Common myeloid progenitor, CD34-positive (primary cell): ENCODE measurements at regions of chr15 and their contacts with region 1.

Region 1: GRCh38 chr15:91271565-91272153 is 171.6 kb downstream of the SV2B start:
- DNase-seq: peak; percentile 72 to 85 (median 73)
- H3K4me3 ChIP-seq: peak overlapping the region in 1 of 7 experiments; percentile 38
- H3K27ac ChIP-seq: no peak overlapping the region
- H3K4me1 ChIP-seq: peaks cover 0 to 7% (median 2%) of the 10 kb centered on the region in 4 experiments
- H3K27me3 ChIP-seq: peaks cover 0 to 3% (median 0%) of the 10 kb centered on the region in 5 experiments

Region 2: GRCh38 chr15:90931737-90932659 is 339.7 kb before region 1 on chr15 and contains the start of gene HDDC3:
- CTCF ChIA-PET with region 1: interaction called, 14 read pairs
- POLR2A ChIA-PET with region 1: no interaction called
- DNase-seq: peak; percentile 90 to 93 (median 91)
- H3K4me3 ChIP-seq: peak within 1 kb of the TSS; percentile 55 to 91 (median 87)
- H3K27ac ChIP-seq: peak within 1 kb of the TSS; percentile 36 to 89
- H3K4me1 ChIP-seq: peaks cover 20 to 72% (median 60%) of the 10 kb centered on the region in 4 experiments
- H3K27me3 ChIP-seq: no peaks in the 10 kb centered on the region

Region 3: GRCh38 chr15:91049378-91050127 is 222.1 kb before region 1 on chr15:
- CTCF ChIA-PET with region 1: interaction called, 41 read pairs
- POLR2A ChIA-PET with region 1: no interaction called
- DNase-seq: peak; percentile 62 to 80 (median 75)
- H3K4me3 ChIP-seq: no peak overlapping the region
- H3K27ac ChIP-seq: no peak overlapping the region
- H3K4me1 ChIP-seq: peaks cover 0 to 9% (median 6%) of the 10 kb centered on the region in 4 experiments
- H3K27me3 ChIP-seq: peaks cover 0 to 9% (median 3%) of the 10 kb centered on the region in 5 experiments

Region 4: GRCh38 chr15:91055548-91056331 is 215.9 kb before region 1 on chr15:
- CTCF ChIA-PET with region 1: interaction called, 41 read pairs
- POLR2A ChIA-PET with region 1: no interaction called
- DNase-seq: peak; percentile 37 to 45 (median 44)
- H3K4me3 ChIP-seq: no peak overlapping the region
- H3K27ac ChIP-seq: no peak overlapping the region
- H3K4me1 ChIP-seq: no peaks in the 10 kb centered on the region
- H3K27me3 ChIP-seq: peaks cover 0 to 41% (median 11%) of the 10 kb centered on the region in 5 experiments

Region 5: DNA sequence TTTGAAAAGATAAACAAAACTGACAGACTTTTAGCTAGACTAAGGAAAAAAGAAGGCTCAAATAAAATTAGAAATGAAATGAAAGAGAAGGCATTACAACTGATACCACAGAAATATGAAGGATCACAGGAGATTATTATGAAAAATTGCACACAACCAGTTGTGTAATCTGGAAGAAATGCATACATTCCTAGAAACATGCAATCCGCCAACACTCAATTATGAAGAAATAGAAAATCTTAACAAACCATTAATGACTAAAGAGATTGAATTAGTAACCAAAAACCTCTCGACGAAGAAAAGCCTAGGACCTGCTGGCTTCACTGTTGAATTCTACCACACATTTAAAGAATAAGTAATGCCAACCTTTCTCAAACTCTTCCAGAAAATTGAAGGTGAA is 22.1 kb before region 1 on chr15:
- CTCF ChIA-PET with region 1: interaction called, 48 read pairs
- POLR2A ChIA-PET with region 1: no interaction called
- DNase-seq: no peak
- H3K4me3 ChIP-seq: no peak overlapping the region
- H3K27ac ChIP-seq: no peak overlapping the region
- H3K4me1 ChIP-seq: peaks cover 0 to 15% (median 8%) of the 10 kb centered on the region in 4 experiments
- H3K27me3 ChIP-seq: no peaks in the 10 kb centered on the region

Region 6: GRCh38 chr15:91258425-91258779 is 13.3 kb before region 1 on chr15:
- CTCF ChIA-PET with region 1: interaction called, 48 read pairs
- POLR2A ChIA-PET with region 1: no interaction called
- DNase-seq: peak; percentile 40 to 70 (median 69)
- H3K4me3 ChIP-seq: peak overlapping the region in 1 of 7 experiments; percentile 46
- H3K27ac ChIP-seq: no peak overlapping the region
- H3K4me1 ChIP-seq: peaks cover 3 to 41% (median 18%) of the 10 kb centered on the region in 4 experiments
- H3K27me3 ChIP-seq: no peaks in the 10 kb centered on the region